AG04450 (cell line): ENCODE measurements at regions of chr15 and their contacts with region 1.

Region 1: GRCh38 chr15:78709263-78709882 is 68.4 kb upstream of the CHRNB4 start:
- DNase-seq: no peak
- H3K4me3 ChIP-seq: 0 out of 2 replicates have a peak overlapping the region, but pooled peaks have one; percentile 20
- H3K27ac ChIP-seq: no peak overlapping the region
- H3K27me3 ChIP-seq: peaks cover 21% of the 10 kb centered on the region
- CTCF ChIP-seq: peak; percentile 90

Region 2: GRCh38 chr15:78618490-78618934 is 90.9 kb before region 1 on chr15:
- CTCF ChIA-PET with region 1: interaction called, 19 read pairs
- POLR2A ChIA-PET with region 1: no interaction called
- DNase-seq: peak; percentile 68
- H3K4me3 ChIP-seq: no peak overlapping the region
- H3K27ac ChIP-seq: no peak overlapping the region
- H3K27me3 ChIP-seq: peaks cover 31% of the 10 kb centered on the region
- CTCF ChIP-seq: peak; percentile 79

Region 3: GRCh38 chr15:78638658-78639314 is 70.6 kb before region 1 on chr15:
- CTCF ChIA-PET with region 1: interaction called, 29 read pairs
- POLR2A ChIA-PET with region 1: no interaction called
- DNase-seq: no peak
- H3K4me3 ChIP-seq: no peak overlapping the region
- H3K27ac ChIP-seq: no peak overlapping the region
- H3K27me3 ChIP-seq: peaks cover 35% of the 10 kb centered on the region
- CTCF ChIP-seq: peak; percentile 68